ENCODE measurements at regions of chr14 and their contacts with region 1.

Region 1: GRCh38 chr14:69818757-69819191 is 21.7 kb upstream of the SLC10A1 start:
- DNase-seq: peak; percentile 70 to 81
- H3K4me3 ChIP-seq: no peak overlapping the region
- H3K4me3 Mint-ChIP-seq: no peak overlapping the region
- H3K27ac Mint-ChIP-seq: no peak overlapping the region
- H3K4me1 ChIP-seq: peaks cover 18% of the 10 kb centered on the region
- H3K4me1 Mint-ChIP-seq: no peaks in the 10 kb centered on the region
- H3K27me3 ChIP-seq: no peaks in the 10 kb centered on the region
- H3K27me3 Mint-ChIP-seq: no peaks in the 10 kb centered on the region
- CTCF ChIP-seq: peak; percentile 76 to 80

Region 2: DNA sequence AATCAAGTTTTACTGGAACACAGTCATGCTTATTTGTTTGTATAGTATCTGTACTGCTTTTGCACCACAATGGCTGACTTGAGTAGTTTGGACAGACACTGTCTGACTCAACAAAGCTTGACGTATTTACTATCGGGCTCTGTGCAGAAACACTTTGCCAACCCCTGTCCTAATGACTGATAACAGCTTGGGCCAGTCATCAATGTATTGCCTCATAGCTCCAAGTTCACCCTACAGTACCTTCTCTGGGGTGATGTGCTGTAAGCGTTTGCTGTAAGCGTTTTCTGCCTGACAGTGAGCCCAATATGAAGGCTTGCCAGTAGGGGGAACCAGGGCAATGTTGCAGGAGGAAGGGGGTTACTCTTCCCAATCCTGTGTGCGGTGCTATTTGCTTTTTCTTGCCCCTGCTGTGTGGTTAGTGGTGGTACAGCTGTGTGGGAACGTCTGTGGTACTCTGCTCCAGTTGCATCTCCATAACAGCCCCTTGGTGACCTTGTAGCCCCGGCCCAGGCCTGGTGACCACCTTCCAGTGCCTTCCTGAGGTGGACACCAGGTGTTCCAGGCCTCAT is 238.7 kb before region 1 on chr14:
- CTCF ChIA-PET with region 1: no interaction called
- POLR2A ChIA-PET with region 1: no interaction called
- intact Hi-C with region 1: loop called (anchors 10 kb)
- DNase-seq: peak; percentile 71 to 73
- H3K4me3 ChIP-seq: no peak overlapping the region
- H3K4me3 Mint-ChIP-seq: no peak overlapping the region
- H3K27ac Mint-ChIP-seq: no peak overlapping the region
- H3K4me1 ChIP-seq: no peaks in the 10 kb centered on the region; the same call in 1 of the 2 replicates
- H3K4me1 Mint-ChIP-seq: peaks cover 16% of the 10 kb centered on the region
- H3K27me3 ChIP-seq: no peaks in the 10 kb centered on the region
- H3K27me3 Mint-ChIP-seq: no peaks in the 10 kb centered on the region
- CTCF ChIP-seq: peak; percentile 37 to 77

Region 3: DNA sequence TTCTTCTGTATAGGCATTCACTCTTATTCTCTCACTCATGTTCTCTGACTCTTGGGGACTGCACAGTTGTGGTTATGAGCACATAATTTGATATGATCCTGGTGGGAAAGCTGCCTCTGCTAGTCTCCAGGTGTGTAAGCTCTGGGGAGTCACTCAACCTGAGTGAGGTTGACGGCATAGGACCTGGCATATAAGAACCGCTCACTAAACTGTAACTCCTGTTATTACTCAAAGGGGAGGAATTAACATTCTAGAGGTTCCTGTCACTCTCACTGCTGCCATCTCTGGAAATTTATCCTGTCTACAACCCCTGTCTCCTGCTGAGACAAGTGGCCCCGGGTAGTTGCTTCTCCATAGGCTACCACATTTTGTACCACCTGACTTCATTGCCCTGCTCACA is 37.8 kb before region 1 on chr14:
- CTCF ChIA-PET with region 1: interaction called, 12 read pairs
- POLR2A ChIA-PET with region 1: no interaction called
- intact Hi-C with region 1: no loop called
- DNase-seq: no peak
- H3K4me3 ChIP-seq: no peak overlapping the region
- H3K4me3 Mint-ChIP-seq: no peak overlapping the region
- H3K27ac Mint-ChIP-seq: peak overlapping the region; percentile 11
- H3K4me1 ChIP-seq: no peaks in the 10 kb centered on the region
- H3K4me1 Mint-ChIP-seq: no peaks in the 10 kb centered on the region
- H3K27me3 ChIP-seq: no peaks in the 10 kb centered on the region
- H3K27me3 Mint-ChIP-seq: no peaks in the 10 kb centered on the region
- CTCF ChIP-seq: no peak

Region 4: GRCh38 chr14:69863083-69863482 is 44.3 kb after region 1 on chr14:
- CTCF ChIA-PET with region 1: interaction called, 4 read pairs
- POLR2A ChIA-PET with region 1: no interaction called
- intact Hi-C with region 1: loop called (anchors 5 kb)
- DNase-seq: no peak
- H3K4me3 ChIP-seq: no peak overlapping the region
- H3K4me3 Mint-ChIP-seq: no peak overlapping the region
- H3K27ac Mint-ChIP-seq: no peak overlapping the region
- H3K4me1 ChIP-seq: peaks cover 9% of the 10 kb centered on the region
- H3K4me1 Mint-ChIP-seq: no peaks in the 10 kb centered on the region
- H3K27me3 ChIP-seq: no peaks in the 10 kb centered on the region
- H3K27me3 Mint-ChIP-seq: no peaks in the 10 kb centered on the region
- CTCF ChIP-seq: no peak

Region 5: DNA sequence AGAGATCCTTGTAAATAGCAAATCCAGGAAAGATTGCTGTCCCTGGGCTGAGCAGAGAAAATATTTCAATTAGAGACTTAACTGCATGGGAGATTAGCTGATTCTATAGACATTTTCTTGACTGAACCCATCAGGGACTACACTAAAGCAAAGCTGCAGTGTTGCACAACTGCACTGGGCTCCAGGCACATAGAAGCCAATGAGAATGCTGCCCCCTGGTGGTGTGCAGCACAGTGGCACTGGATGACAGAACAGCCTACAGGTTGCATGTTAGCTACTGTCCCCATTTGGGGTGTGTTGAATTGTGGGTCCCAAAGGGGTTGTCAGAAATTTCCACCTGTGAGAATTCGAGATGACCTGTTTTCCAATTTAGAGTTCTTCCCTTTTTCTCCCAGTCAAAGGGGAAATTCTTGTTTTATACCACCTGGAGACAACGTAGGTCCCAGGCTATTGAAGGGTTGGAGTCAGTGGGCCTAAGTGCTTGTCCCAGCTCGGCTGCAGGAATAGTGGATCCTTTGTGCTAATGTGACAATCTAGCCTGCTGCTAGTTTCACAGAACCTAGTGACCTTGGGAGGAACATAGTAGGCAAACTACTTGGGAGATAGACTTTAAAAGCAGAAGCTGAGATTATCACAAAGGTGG is 255.3 kb after region 1 on chr14:
- CTCF ChIA-PET with region 1: interaction called, 12 read pairs
- POLR2A ChIA-PET with region 1: no interaction called
- intact Hi-C with region 1: loop called (anchors 1 kb)
- DNase-seq: peak; percentile 82 to 87
- H3K4me3 ChIP-seq: no peak overlapping the region
- H3K4me3 Mint-ChIP-seq: no peak overlapping the region
- H3K27ac Mint-ChIP-seq: no peak overlapping the region
- H3K4me1 ChIP-seq: peaks cover 13% of the 10 kb centered on the region
- H3K4me1 Mint-ChIP-seq: peaks cover 18% of the 10 kb centered on the region
- H3K27me3 ChIP-seq: no peaks in the 10 kb centered on the region
- H3K27me3 Mint-ChIP-seq: no peaks in the 10 kb centered on the region
- CTCF ChIP-seq: peak; percentile 88 to 96

Measured in Caco-2 (cell line).